SK-N-SH (cell line): ENCODE measurements at regions of chr11 and their contacts with region 1.

Region 1: DNA sequence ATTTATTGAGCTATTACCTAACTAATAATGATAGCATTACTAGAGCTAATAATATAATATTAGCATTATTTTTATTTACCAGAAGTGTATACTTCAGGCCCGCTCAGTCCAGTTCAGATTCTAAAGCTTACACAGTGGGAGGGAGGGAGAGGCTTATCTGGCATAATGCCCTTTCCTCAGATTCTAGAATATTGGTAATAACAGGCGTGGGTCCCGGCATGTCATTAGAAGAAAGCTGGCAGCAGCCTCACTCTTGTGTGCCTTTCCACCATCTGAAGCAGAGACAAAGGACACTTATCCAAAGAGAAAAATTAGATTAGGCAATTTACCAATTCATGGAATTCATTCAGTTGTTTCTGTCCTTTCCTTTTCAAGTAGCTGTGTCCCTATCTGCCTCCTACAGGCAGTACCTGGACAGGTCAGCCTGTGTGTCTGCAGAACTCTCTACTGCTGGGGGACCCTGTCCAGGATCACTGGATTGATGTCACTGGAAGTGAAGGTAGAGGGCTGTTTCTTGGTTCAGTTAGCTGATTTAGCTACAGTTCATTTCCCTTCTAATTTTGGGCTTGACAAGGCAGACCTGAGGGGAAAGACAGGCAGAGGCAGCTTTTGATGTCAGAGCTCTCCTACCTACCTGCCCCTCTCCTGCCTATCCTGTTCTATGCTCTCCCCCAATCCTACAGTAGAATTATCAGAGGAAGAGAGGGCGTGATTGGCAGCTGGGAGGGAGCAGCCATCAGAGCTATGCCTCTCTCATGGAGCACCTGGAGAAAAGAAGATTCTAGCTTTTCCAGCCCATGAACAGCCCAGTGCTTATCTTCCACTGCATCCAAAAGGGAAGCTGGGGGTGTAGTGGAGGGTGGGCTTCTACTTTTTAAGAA is 20.3 kb upstream of the CCDC90B start:
- DNase-seq: no peak
- H3K4me3 ChIP-seq: no peak overlapping the region
- H3K27ac ChIP-seq: no peak overlapping the region
- H3K4me1 ChIP-seq: no peaks in the 10 kb centered on the region; a peak in 1 of 4 replicates
- H3K27me3 ChIP-seq: no peaks in the 10 kb centered on the region
- CTCF ChIP-seq: no peak
- EP300 ChIP-seq: no peak
- RAD21 ChIP-seq: no peak

Region 2: GRCh38 chr11:83241291-83241946 is 65.0 kb before region 1 on chr11:
- CTCF ChIA-PET with region 1: no interaction called
- POLR2A ChIA-PET with region 1: no interaction called
- DNase-seq: peak; percentile 38
- H3K4me3 ChIP-seq: no peak overlapping the region; a peak in 1 of 4 replicates
- H3K27ac ChIP-seq: no peak overlapping the region
- H3K4me1 ChIP-seq: no peaks in the 10 kb centered on the region; a peak in 1 of 4 replicates
- H3K27me3 ChIP-seq: no peaks in the 10 kb centered on the region
- CTCF ChIP-seq: peak; percentile 69
- EP300 ChIP-seq: no peak
- RAD21 ChIP-seq: peak; percentile 57

Region 3: DNA sequence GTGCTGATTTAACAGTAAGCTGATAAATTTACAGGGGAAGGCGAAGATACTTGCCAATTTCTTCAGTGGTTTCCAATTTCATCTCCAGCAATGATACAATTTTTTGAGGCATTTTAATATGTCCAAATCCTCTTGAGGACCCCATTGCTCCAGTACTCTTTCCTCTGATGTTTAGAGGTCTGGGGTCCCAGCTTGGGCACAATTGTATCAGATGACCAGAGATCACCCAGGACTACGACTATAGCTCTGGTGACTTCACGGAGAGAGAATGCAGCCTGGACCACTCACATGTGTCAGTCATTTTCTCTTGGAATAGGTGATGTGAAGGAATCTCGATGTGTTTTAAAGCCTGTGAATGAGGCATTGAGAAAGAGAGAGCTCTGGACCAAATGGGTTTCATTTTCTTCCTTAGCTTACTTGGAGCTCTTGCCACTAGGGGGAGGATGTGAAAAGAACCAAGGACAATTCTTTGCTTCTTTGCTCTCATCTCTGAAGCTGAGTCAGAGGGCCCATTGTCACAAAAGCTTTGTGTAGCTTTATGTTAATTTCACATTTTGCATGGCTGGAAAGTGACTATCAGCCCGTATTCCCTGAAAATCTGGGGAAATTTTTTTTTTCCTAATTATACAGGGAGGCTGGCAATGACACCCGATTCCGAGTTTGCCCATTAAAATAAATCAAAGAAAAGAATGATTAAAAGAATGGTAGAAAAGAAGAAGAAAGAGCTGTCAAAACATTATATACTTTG is 13.6 kb before region 1 on chr11:
- CTCF ChIA-PET with region 1: interaction called, 19 read pairs
- POLR2A ChIA-PET with region 1: no interaction called
- DNase-seq: peak; percentile 40
- H3K4me3 ChIP-seq: peak overlapping the region in 1 of 2 experiments; percentile 40; a peak in 1 of 4 replicates
- H3K27ac ChIP-seq: no peak overlapping the region
- H3K4me1 ChIP-seq: no peaks in the 10 kb centered on the region
- H3K27me3 ChIP-seq: no peaks in the 10 kb centered on the region
- CTCF ChIP-seq: peak; percentile 78
- EP300 ChIP-seq: no peak
- RAD21 ChIP-seq: peak; percentile 73